ENCODE measurements at regions of chr7 and their contacts with region 1.

Region 1: DNA sequence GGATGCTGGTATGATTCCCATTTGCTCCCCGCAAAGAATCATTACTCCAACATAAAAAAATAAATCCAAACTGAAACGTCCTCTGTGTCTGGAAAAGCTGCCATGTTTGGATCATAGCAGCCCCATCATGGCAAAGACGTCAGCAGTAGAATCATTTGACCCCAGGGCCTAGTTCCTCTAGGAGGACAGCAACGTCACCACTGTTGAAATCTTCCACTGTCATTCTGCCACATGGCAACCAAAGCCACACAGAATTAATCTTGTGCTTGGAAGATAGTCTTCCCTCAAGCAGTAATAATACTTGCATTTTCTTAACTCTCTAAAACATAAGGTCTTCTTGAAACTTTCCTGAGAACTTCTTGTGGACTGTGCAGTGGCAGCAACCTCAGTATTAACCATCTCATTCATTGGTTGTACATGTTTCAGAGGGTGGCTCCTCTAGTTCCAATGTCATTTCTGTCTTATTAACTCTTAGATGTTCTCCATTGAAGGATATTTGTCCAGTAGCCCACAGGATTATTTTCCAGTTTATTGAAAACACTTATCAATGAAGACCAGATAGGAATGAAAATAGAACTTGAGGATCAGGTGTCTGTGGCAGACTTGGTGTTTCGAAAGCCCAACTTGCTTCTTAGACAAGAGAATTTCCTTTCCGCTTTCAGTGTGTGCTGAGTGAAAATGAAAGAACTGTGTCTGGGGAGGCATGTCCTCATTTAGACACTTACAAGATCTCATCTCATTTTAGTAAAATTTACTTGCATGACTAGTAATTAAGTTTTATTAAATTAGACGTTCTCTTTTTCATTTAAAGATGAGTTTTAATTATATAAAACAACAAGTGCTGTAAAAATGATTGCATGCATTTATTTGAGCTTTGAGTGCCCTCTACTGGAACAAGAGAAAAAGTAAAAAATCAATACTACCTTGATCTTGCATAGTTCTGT is 28.9 kb upstream of the INHBA start:
- DNase-seq: no peak
- H3K4me3 ChIP-seq: no peak overlapping the region
- H3K27ac ChIP-seq: no peak overlapping the region
- H3K4me1 ChIP-seq: peaks cover 0 to 5% (median 0%) of the 10 kb centered on the region in 4 donors
- H3K27me3 ChIP-seq: no peaks in the 10 kb centered on the region
- CTCF ChIP-seq: peak in 1 of 4 experiments; percentile 34
- EP300 ChIP-seq: no peak
- POLR2A ChIP-seq: no peak

Region 2: DNA sequence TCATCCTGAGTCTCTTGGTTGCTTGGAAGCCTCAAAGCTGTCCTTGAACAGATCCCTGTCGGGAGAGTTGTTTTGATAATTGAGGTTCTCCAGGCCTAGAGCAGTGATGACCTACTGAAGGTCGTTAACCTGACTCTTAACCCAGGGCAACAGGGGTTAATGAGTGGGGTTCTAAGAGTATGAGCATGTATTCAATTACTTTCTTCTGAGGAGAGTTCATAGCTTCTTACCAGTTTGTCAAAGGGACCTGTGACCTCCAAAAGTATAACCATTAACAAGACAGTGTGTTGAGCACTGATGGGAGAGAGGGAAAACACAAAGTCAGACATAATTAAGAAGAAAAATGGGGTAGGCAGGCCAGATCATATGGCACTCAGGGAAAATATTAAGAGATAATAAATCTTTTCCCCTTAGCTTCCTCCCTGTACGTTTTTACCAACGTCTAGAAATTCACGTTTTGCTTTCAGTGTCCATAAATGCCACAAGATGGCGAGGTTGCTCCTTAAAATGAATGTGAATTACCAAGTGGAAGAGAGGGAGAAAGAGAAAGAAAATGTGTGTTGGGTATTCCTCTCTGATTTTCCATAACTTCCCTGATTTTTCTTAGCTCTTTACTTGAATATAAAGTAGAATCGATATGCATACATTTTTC is 1499.4 kb before region 1 on chr7:
- intact Hi-C with region 1: loop called (anchors 10 kb)
- DNase-seq: no peak
- H3K4me3 ChIP-seq: no peak overlapping the region
- H3K27ac ChIP-seq: no peak overlapping the region
- H3K4me1 ChIP-seq: peaks cover 0 to 6% (median 0%) of the 10 kb centered on the region in 4 donors
- H3K27me3 ChIP-seq: no peaks in the 10 kb centered on the region
- CTCF ChIP-seq: peak in 3 of 4 experiments; percentile 23 to 47 (median 44)
- EP300 ChIP-seq: no peak
- POLR2A ChIP-seq: no peak

Region 3: DNA sequence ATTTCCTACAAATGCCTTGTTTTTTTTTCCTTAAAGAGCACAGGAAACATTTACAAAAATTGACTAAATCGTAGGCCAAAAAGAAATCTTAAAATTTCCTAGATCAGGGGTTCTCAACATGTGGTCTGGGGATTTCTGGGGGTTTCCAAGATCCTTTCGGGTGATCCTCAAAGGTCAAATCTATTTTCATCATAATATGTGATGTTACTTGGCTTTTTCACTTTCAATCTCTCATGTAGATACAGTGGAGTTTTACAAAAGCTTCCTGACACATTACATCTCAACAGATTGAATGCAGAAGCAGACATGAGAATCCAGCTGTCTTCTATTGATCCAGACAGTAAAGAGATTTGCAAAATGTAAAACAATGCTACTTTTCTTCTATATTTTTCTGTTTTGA is 526.2 kb before region 1 on chr7:
- intact Hi-C with region 1: no loop called
- DNase-seq: no peak
- H3K4me3 ChIP-seq: no peak overlapping the region
- H3K27ac ChIP-seq: no peak overlapping the region
- H3K4me1 ChIP-seq: no peaks in the 10 kb centered on the region
- H3K27me3 ChIP-seq: no peaks in the 10 kb centered on the region
- CTCF ChIP-seq: no peak
- EP300 ChIP-seq: no peak
- POLR2A ChIP-seq: no peak

Region 4: DNA sequence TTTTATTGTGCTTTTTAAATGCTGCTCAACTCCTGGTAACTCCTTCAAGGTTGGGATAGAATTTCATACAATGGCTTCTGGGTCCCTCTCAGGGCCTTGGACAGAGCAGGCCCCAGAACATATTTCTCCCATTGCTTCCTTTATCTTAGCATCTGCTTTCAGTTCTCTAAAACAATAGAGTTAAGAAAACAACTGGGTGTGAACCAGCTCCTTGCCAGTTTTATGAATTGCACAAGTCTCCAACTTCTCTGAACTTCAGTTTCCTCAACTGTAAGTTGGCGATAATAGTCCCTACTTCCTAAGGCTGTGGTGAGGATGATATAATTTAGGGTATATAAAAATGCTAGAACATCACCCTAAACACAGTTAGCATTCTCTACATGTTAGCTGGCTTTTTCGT is 48.2 kb after region 1 on chr7:
- intact Hi-C with region 1: no loop called
- DNase-seq: no peak
- H3K4me3 ChIP-seq: no peak overlapping the region
- H3K27ac ChIP-seq: no peak overlapping the region
- H3K4me1 ChIP-seq: no peaks in the 10 kb centered on the region
- H3K27me3 ChIP-seq: no peaks in the 10 kb centered on the region
- CTCF ChIP-seq: no peak
- EP300 ChIP-seq: no peak
- POLR2A ChIP-seq: no peak